Colonic mucosa (tissue), 4 donors: ENCODE measurements at regions of chr2 and their contacts with region 1.

Region 1: DNA sequence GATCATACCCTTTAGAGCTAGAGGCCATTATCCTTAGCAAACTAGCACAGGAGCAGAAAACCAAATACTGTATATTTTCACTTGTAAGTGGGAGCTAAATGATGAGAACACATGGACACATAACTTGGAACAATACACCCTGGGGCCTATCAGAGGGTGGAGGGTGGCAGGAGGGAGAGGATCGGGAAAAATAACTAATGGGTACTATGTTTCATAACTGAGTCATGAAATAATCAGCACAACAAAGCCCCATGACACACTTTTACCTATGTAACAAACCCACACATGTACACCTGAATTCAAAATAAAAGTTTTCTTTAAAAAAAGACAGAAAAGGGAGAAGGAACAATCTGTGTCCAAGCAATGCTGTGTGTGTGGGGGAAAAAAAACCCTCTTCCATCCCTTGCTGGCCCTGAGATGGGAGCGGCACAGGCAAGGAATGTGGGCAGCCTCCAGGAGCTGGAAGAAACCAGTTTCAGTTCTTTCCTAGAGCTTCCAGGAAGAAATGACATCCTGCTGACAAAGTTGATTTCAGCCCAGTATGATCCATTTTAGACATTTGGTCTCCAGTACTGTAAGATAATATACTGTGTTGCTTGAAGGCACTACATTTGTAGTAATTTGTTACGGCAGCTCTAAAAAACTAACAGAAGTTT is 458.7 kb upstream of the CNTNAP5 start:
- DNase-seq: no peak
- H3K4me3 ChIP-seq: no peak overlapping the region
- H3K27ac ChIP-seq: no peak overlapping the region
- H3K4me1 ChIP-seq: no peaks in the 10 kb centered on the region
- H3K27me3 ChIP-seq: no peaks in the 10 kb centered on the region
- CTCF ChIP-seq: no peak

Region 2: GRCh38 chr2:123540291-123540690 is 26.1 kb before region 1 on chr2:
- intact Hi-C with region 1: loop called (anchors 2 kb)
- DNase-seq: no peak
- H3K4me3 ChIP-seq: no peak overlapping the region
- H3K27ac ChIP-seq: no peak overlapping the region
- H3K4me1 ChIP-seq: no peaks in the 10 kb centered on the region
- H3K27me3 ChIP-seq: no peaks in the 10 kb centered on the region
- CTCF ChIP-seq: no peak